Uterus (tissue), 4 donors: ENCODE measurements at regions of chr3 and their contacts with region 1.

Region 1: DNA sequence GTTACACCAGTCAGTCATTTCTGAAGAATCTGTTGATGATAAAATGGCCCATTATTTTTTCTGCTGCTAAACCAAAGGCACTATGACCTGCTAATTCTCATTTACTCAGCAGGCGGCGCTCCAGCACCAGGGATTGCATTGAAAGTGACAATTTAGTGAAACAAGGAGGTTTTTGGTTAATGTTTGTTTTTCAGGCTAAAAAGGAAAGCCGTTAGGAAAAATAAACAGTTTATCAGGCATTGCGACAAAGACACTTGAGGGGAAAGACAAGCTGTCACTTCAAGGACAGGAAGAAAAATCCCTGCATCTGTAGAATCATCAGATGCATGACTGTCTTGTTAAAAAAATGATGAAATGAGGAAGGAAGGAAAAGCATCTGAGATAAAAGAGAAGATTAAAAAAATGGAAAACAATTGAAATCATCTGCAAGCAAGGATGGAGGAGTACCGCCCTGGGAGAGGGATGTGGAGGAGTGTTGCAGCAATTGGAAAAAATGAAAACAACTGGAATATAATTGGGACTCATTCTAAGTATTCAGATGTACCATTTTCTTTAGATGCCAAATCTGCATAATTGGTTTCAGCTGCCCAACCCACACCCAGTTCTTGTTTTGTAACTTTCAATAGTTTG is 54.0 kb downstream of the NR1D2 start:
- DNase-seq: peak; percentile 81 to 84
- H3K4me3 ChIP-seq: no peak overlapping the region
- H3K27ac ChIP-seq: peak overlapping the region; percentile 47 to 59
- H3K4me1 ChIP-seq: no peaks in the 10 kb centered on the region
- H3K27me3 ChIP-seq: no peaks in the 10 kb centered on the region
- CTCF ChIP-seq: peak; percentile 92 to 98 (median 96)
- POLR2A ChIP-seq: no peak

Region 2: GRCh38 chr3:23377928-23378672 is 621.0 kb before region 1 on chr3:
- intact Hi-C with region 1: no loop called
- DNase-seq: no peak
- H3K4me3 ChIP-seq: no peak overlapping the region
- H3K27ac ChIP-seq: no peak overlapping the region
- H3K4me1 ChIP-seq: no peaks in the 10 kb centered on the region
- H3K27me3 ChIP-seq: no peaks in the 10 kb centered on the region
- CTCF ChIP-seq: no peak
- POLR2A ChIP-seq: no peak

Region 3: DNA sequence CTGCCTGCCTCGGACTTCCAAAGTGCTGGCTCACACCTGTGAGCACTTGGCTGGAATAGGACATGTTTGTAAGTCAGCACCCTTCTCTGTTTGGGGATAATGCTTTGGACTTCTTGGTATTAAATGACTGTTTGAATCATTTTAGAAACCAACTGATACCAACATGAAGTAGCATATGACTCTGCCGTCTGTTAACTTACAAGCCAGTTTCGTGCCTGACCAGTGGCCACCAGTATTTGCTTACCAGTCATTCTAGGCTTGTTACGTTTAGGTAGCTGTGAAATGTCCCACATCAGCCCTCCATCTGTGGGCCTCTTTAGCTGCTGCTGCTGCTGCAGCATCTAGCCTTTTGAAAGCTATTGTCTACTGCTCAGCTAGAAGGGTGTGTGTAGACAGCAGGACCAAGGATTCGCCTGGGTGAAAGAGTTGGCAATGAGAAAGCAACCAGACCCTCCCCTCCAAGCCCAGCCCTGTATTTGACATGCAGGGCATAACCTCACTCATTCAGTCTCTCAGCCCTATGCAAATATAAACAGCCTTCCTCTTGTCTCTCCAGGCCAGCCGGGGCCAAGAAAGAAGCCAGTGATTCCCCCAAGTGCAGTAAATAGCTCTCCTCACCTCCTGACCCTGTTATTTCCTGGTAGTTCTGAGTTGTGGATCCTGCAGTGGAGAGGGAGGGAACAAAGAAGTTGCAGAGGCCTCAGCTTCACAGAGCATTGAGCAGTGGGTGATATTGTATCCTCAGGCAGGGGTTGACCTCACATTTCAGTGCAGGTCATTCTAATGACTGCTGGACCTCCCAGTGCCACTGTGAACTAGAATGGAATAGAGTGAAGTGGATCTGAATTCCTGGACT is 133.3 kb before region 1 on chr3:
- intact Hi-C with region 1: no loop called
- DNase-seq: no peak
- H3K4me3 ChIP-seq: no peak overlapping the region
- H3K27ac ChIP-seq: peak overlapping the region in 1 of 2 donors; percentile 26
- H3K4me1 ChIP-seq: peaks cover 0 to 9% of the 10 kb centered on the region in 2 donors
- H3K27me3 ChIP-seq: no peaks in the 10 kb centered on the region
- CTCF ChIP-seq: no peak
- POLR2A ChIP-seq: no peak

Region 4: GRCh38 chr3:24119321-24119751 is 120.2 kb after region 1 on chr3:
- intact Hi-C with region 1: no loop called
- DNase-seq: no peak
- H3K4me3 ChIP-seq: no peak overlapping the region
- H3K27ac ChIP-seq: no peak overlapping the region
- H3K4me1 ChIP-seq: no peaks in the 10 kb centered on the region
- H3K27me3 ChIP-seq: no peaks in the 10 kb centered on the region
- CTCF ChIP-seq: no peak
- POLR2A ChIP-seq: no peak

Region 5: GRCh38 chr3:24237971-24238767 is 239.0 kb after region 1 on chr3:
- intact Hi-C with region 1: loop called (anchors 5 kb)
- DNase-seq: peak; percentile 32 to 68
- H3K4me3 ChIP-seq: no peak overlapping the region
- H3K27ac ChIP-seq: peak overlapping the region; percentile 63 to 79
- H3K4me1 ChIP-seq: peaks cover 0 to 20% of the 10 kb centered on the region in 2 donors
- H3K27me3 ChIP-seq: no peaks in the 10 kb centered on the region
- CTCF ChIP-seq: peak; percentile 70 to 75 (median 74)
- POLR2A ChIP-seq: no peak

Region 6: GRCh38 chr3:24680214-24680967 is 681.3 kb after region 1 on chr3:
- intact Hi-C with region 1: loop called (anchors 5 kb)
- DNase-seq: peak; percentile 56 to 64
- H3K4me3 ChIP-seq: no peak overlapping the region
- H3K27ac ChIP-seq: peak overlapping the region in 1 of 2 donors; percentile 63
- H3K4me1 ChIP-seq: no peaks in the 10 kb centered on the region
- H3K27me3 ChIP-seq: no peaks in the 10 kb centered on the region
- CTCF ChIP-seq: peak; percentile 43 to 59 (median 51)
- POLR2A ChIP-seq: no peak